Activated CD4-positive, alpha-beta T cell treated with anti-CD3 and anti-CD28 coated beads for 36 hours (primary cell): ENCODE measurements at regions of chr11 and their contacts with region 1.

Region 1: GRCh38 chr11:114400217-114400914 is at the starts of genes C11orf71 and RBM7:
- DNase-seq: peak; percentile 99
- ATAC-seq: peak; percentile 95
- H3K4me3 Mint-ChIP-seq: peak within 1 kb of the TSS; percentile 98
- H3K27ac Mint-ChIP-seq: peak within 1 kb of the TSS; percentile 99
- H3K4me1 Mint-ChIP-seq: peaks cover 49% of the 10 kb centered on the region
- H3K27me3 Mint-ChIP-seq: no peaks in the 10 kb centered on the region
- total RNA-seq, gene C11orf71: 4.8 to 5.5 TPM
- total RNA-seq, gene RBM7: 46.7 to 72.3 TPM

Region 2: GRCh38 chr11:113314389-113315301 is 1085.7 kb before region 1 on chr11 and contains the start of gene TTC12:
- CTCF ChIA-PET with region 1: no interaction called
- POLR2A ChIA-PET with region 1: no interaction called
- intact Hi-C with region 1: loop called in 1 of 2 experiments (anchors 5 kb)
- DNase-seq: peak; percentile 97
- ATAC-seq: peak; percentile 99
- H3K4me3 Mint-ChIP-seq: peak within 1 kb of the TSS; percentile 77
- H3K27ac Mint-ChIP-seq: peak within 1 kb of the TSS; percentile 82
- H3K4me1 Mint-ChIP-seq: peaks cover 24% of the 10 kb centered on the region
- H3K27me3 Mint-ChIP-seq: no peaks in the 10 kb centered on the region
- total RNA-seq, gene TTC12: 16.3 to 17.6 TPM

Region 3: GRCh38 chr11:113974741-113975470 is 425.5 kb before region 1 on chr11 and contains the start of gene HTR3A:
- CTCF ChIA-PET with region 1: no interaction called
- POLR2A ChIA-PET with region 1: no interaction called
- intact Hi-C with region 1: no loop called
- DNase-seq: no peak
- ATAC-seq: no peak
- H3K4me3 Mint-ChIP-seq: no peak within 1 kb of the TSS
- H3K27ac Mint-ChIP-seq: no peak within 1 kb of the TSS
- H3K4me1 Mint-ChIP-seq: no peaks in the 10 kb centered on the region
- H3K27me3 Mint-ChIP-seq: peaks cover 3% of the 10 kb centered on the region
- total RNA-seq, gene HTR3A: not detected

Region 4: GRCh38 chr11:114159802-114160632 is 240.3 kb before region 1 on chr11:
- CTCF ChIA-PET with region 1: no interaction called
- POLR2A ChIA-PET with region 1: no interaction called
- intact Hi-C with region 1: loop called in 1 of 2 experiments (anchors 10 kb)
- DNase-seq: peak; percentile 93
- ATAC-seq: peak; percentile 83
- H3K4me3 Mint-ChIP-seq: peak overlapping the region; percentile 49
- H3K27ac Mint-ChIP-seq: peak overlapping the region; percentile 76
- H3K4me1 Mint-ChIP-seq: peaks cover 70% of the 10 kb centered on the region
- H3K27me3 Mint-ChIP-seq: no peaks in the 10 kb centered on the region

Region 5: GRCh38 chr11:114340311-114341131 is 59.8 kb before region 1 on chr11:
- CTCF ChIA-PET with region 1: interaction called, 3 read pairs
- POLR2A ChIA-PET with region 1: no interaction called
- intact Hi-C with region 1: loop called in 1 of 2 experiments (anchors 2 kb)
- DNase-seq: peak; percentile 50
- ATAC-seq: peak; percentile 72
- H3K4me3 Mint-ChIP-seq: peak overlapping the region; percentile 43
- H3K27ac Mint-ChIP-seq: no peak overlapping the region
- H3K4me1 Mint-ChIP-seq: peaks cover 9% of the 10 kb centered on the region
- H3K27me3 Mint-ChIP-seq: peaks cover 4% of the 10 kb centered on the region

Region 6: DNA sequence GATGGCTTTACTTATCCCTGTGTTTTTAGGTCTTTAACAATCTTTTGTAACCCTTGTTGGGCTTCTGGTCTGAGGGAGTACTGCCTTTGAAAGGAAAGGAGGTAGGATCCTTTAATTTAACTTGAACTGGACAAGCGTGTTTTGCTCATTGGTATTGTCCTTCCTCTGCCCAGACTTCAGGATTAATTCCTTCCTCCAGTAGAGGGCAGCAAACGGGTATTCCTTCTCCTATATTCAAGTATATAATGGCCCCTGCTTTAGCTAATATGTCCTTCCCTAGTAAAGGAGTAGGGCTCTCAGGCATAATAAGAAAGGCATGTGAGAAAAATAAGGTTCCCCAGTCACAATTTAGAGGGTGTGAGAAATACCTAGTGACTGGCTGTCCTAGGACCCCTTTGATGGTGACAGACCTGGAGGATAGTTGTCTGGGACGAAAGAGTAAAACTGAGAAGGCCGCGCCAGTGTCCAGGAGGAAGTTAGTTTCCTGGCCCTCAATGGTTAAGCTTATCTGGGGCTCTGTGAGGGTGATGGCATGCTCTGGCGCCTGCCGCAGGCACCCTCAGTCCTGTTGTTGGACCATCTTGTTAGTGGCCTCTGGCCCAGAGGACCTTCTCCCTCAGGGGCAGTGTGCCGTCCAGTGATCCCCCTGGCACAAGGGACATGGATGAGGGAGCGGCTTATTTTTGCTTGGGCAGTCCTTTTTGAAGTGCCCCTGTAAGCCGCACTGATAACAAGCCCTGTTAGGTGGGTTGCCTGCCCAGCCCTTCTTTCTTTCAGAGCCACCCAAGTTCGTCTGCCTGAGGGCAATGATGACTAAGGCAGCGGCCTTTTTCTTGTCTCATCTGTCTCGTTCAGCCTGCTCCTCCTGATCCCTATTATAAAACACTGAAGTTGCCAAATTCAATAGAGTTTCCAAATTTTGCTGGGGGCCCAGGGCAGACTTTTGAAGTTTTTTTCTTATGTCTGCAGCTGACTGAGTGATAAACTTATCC is 51.9 kb before region 1 on chr11:
- CTCF ChIA-PET with region 1: interaction called, 5 read pairs
- POLR2A ChIA-PET with region 1: no interaction called
- intact Hi-C with region 1: loop called in 1 of 2 experiments (anchors 1 kb)
- DNase-seq: peak; percentile 38
- ATAC-seq: no peak
- H3K4me3 Mint-ChIP-seq: no peak overlapping the region
- H3K27ac Mint-ChIP-seq: no peak overlapping the region
- H3K4me1 Mint-ChIP-seq: peaks cover 4% of the 10 kb centered on the region
- H3K27me3 Mint-ChIP-seq: no peaks in the 10 kb centered on the region

Region 7: DNA sequence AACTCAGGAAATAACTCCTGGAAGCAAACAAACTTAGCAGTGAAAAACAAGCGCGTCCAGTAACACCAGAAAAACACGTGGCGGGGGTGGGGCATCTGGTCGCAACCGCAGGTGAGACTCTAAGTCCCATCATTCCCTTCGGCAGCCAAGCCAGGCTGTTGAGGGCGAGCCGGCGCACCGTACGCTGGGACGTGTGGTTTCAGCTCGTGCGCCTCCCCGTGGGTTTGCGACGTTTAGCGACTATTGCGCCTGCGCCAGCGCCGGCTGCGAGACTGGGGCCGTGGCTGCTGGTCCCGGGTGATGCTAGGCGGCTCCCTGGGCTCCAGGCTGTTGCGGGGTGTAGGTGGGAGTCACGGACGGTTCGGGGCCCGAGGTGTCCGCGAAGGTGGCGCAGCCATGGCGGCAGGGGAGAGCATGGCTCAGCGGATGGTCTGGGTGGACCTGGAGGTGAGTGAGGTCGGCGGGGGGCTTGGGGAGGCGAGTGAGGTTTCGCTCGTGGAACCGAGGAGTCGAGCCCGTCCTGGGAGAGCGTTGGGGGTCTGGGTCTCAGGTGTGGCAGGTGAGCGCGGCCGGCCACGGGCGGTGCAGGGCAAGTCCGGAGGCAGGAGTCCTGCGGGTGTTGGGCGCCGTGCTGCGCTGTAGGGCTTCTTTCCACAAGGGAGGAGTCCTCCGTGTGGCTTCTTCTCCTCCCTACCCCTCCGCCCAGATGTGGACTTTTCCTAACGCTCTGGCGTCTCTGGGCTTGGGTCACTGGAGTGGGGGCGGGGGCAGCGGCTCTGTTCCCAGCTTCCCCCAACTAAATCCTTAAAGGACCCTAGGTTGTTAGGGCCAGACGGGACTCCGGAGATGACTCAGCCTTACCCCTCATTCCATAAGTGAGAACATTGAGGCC is 39.1 kb after region 1 on chr11 and contains the start of gene REXO2:
- CTCF ChIA-PET with region 1: interaction called, 4 read pairs
- POLR2A ChIA-PET with region 1: interaction called, 4 read pairs
- intact Hi-C with region 1: loop called (anchors 1 kb)
- DNase-seq: peak; percentile 96
- ATAC-seq: peak; percentile 97
- H3K4me3 Mint-ChIP-seq: peak within 1 kb of the TSS; percentile 93
- H3K27ac Mint-ChIP-seq: peak within 1 kb of the TSS; percentile 93
- H3K4me1 Mint-ChIP-seq: peaks cover 27% of the 10 kb centered on the region
- H3K27me3 Mint-ChIP-seq: no peaks in the 10 kb centered on the region
- total RNA-seq, gene REXO2: 66.6 to 70.0 TPM